ENCODE measurements at regions of chr22 and their contacts with region 1.

Region 1: GRCh38 chr22:22130953-22131608 is 113.5 kb upstream of the VPREB1 start:
- DNase-seq: peak; percentile 37
- H3K4me3 ChIP-seq: no peak overlapping the region
- H3K27ac ChIP-seq: no peak overlapping the region
- H3K4me1 ChIP-seq: peaks cover 13% of the 10 kb centered on the region
- CTCF ChIP-seq: no peak

Region 2: DNA sequence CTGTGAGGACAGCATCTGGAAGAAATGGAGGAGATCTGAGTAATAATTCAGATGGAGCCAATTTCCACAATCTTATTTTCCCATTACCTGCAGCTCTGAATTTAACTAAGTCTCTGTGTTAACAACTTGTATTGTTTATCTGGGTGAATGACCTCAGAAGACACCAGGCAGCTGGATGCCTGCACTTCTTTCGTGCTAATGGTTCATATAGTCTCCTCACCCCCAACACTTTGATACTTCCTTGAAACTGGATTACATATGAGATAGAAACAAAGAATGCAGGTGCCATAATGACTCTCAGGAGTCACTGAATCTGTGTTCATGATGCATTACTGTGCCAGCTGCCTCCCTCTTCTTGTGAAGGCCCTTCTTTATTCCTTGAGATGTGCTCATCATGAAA is 12.1 kb before region 1 on chr22:
- CTCF ChIA-PET with region 1: no interaction called
- POLR2A ChIA-PET with region 1: interaction called, 13 read pairs
- intact Hi-C with region 1: no loop called
- DNase-seq: no peak
- H3K4me3 ChIP-seq: no peak overlapping the region
- H3K27ac ChIP-seq: no peak overlapping the region
- H3K4me1 ChIP-seq: no peaks in the 10 kb centered on the region
- CTCF ChIP-seq: no peak